ENCODE measurements at regions of chr5 and their contacts with region 1.

Region 1: GRCh38 chr5:122845229-122846050 is at the start of gene SNX24:
- DNase-seq: peak; percentile 74
- H3K4me3 ChIP-seq: peak within 1 kb of the TSS; percentile 60 to 94 (median 81)
- H3K27ac ChIP-seq: peak within 1 kb of the TSS; percentile 87
- H3K4me1 ChIP-seq: peaks cover 43% of the 10 kb centered on the region
- H3K27me3 ChIP-seq: no peaks in the 10 kb centered on the region
- CTCF ChIP-seq: no peak
- total RNA-seq, gene SNX24: 46.8 to 58.2 TPM

Region 2: DNA sequence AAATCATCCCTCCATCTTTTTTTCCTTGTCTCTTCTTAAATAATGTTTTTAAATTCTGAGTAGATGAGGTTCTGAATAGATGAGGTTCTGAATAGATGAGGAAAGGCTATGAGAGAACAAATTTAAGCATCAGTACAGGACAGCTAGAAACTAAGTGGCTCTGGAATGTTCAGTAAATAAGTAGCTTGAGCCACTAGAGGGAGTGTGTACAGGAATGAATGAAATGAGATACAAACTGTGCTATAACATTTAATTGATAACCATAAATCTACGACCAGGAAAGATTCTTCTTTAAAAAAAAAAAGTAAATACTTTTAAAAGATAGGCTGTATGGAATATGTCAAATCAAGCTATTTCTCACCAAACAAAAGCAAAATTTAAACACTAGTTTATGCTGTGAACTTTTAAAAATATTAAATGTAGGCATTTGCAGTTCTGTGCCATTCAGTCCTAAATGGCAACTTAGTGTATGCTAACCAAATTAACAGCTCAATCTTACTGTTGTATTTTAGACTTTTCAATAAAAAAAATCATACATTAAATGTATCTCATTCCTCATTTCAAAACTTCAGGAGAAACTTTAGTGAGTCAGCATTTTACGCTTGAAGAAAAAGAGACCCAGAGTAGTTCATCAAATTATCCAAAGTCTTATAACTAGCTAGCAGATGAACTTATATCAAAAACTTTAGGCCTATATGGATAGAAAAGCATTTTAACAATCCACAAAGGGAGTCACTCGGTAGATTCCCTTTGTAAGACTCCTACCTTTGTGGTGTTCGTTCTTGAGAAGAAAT is 141.0 kb before region 1 on chr5:
- CTCF ChIA-PET with region 1: no interaction called
- dilution Hi-C with region 1: no loop called
- in situ Hi-C with region 1: no loop called
- intact Hi-C with region 1: loop called (anchors 1 kb)
- DNase-seq: peak; percentile 35
- H3K4me3 ChIP-seq: no peak overlapping the region
- H3K27ac ChIP-seq: no peak overlapping the region
- H3K4me1 ChIP-seq: no peaks in the 10 kb centered on the region
- H3K27me3 ChIP-seq: no peaks in the 10 kb centered on the region
- CTCF ChIP-seq: peak; percentile 53 to 63

Region 3: GRCh38 chr5:122751293-122751753 is 94.1 kb before region 1 on chr5:
- CTCF ChIA-PET with region 1: no interaction called
- dilution Hi-C with region 1: no loop called
- in situ Hi-C with region 1: no loop called
- intact Hi-C with region 1: loop called (anchors 2 kb)
- DNase-seq: peak; percentile 96
- H3K4me3 ChIP-seq: no peak overlapping the region
- H3K27ac ChIP-seq: peak overlapping the region; percentile 95
- H3K4me1 ChIP-seq: peaks cover 31% of the 10 kb centered on the region
- H3K27me3 ChIP-seq: no peaks in the 10 kb centered on the region
- CTCF ChIP-seq: no peak

Region 4: GRCh38 chr5:122774861-122775549 is 70.4 kb before region 1 on chr5 and contains the start of gene SNX2:
- CTCF ChIA-PET with region 1: no interaction called
- dilution Hi-C with region 1: no loop called
- in situ Hi-C with region 1: no loop called
- intact Hi-C with region 1: loop called (anchors 5 kb)
- DNase-seq: peak; percentile 78
- H3K4me3 ChIP-seq: peak within 1 kb of the TSS; percentile 90 to 98 (median 96)
- H3K27ac ChIP-seq: peak within 1 kb of the TSS; percentile 78
- H3K4me1 ChIP-seq: peaks cover 10% of the 10 kb centered on the region
- H3K27me3 ChIP-seq: no peaks in the 10 kb centered on the region
- CTCF ChIP-seq: peak in 1 of 2 donors; percentile 41
- total RNA-seq, gene SNX2: 42.0 to 64.9 TPM

Region 5: DNA sequence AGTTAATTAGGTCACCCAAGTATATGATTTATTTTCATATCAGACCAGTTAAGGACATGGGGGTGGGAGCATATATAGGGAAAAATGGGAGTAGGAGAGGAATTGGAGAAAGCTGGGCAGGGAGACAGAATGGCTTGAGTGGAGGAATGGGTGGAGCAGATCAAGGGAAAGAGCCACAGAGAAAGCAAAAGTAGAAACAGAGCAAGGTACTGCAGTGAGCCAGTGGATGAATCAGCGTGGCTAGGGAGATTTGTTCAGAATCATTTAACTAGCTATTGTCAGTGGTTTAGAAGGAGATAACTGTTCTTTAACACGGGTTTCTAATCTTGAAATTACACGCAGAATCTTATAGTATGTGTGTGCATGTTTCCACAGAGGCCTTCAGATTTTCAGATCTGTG is 37.4 kb after region 1 on chr5:
- CTCF ChIA-PET with region 1: no interaction called
- dilution Hi-C with region 1: no loop called
- in situ Hi-C with region 1: no loop called
- intact Hi-C with region 1: loop called (anchors 5 kb)
- DNase-seq: peak; percentile 55
- H3K4me3 ChIP-seq: no peak overlapping the region
- H3K27ac ChIP-seq: no peak overlapping the region
- H3K4me1 ChIP-seq: peaks cover 3% of the 10 kb centered on the region
- H3K27me3 ChIP-seq: no peaks in the 10 kb centered on the region
- CTCF ChIP-seq: no peak

Measured in mammary epithelial cell (primary cell).